Activated CD8-positive, alpha-beta memory T cell treated with anti-CD3 and anti-CD28 coated beads, Interleukin-2, amount 10 ng/mL, durations not matched to agents 7 days and 5 days (primary cell): ENCODE measurements at regions of chr17 and their contacts with region 1.

Region 1: GRCh38 chr17:28612936-28613872 is 781 bp downstream of the RSKR start:
- DNase-seq: peak; percentile 50
- ATAC-seq: peak; percentile 63
- H3K4me3 Mint-ChIP-seq: no peak overlapping the region
- H3K27ac Mint-ChIP-seq: peak overlapping the region; percentile 47
- H3K4me1 Mint-ChIP-seq: no peaks in the 10 kb centered on the region
- H3K27me3 Mint-ChIP-seq: no peaks in the 10 kb centered on the region

Region 2: GRCh38 chr17:28494445-28495188 is 118.6 kb before region 1 on chr17:
- CTCF ChIA-PET with region 1: interaction called, 14 read pairs
- DNase-seq: peak; percentile 79
- ATAC-seq: peak; percentile 93
- H3K4me3 Mint-ChIP-seq: no peak overlapping the region
- H3K27ac Mint-ChIP-seq: no peak overlapping the region
- H3K4me1 Mint-ChIP-seq: no peaks in the 10 kb centered on the region
- H3K27me3 Mint-ChIP-seq: peaks cover 7% of the 10 kb centered on the region